Activated B cell treated with CpG ODN at 0.5 μM for 24 hours (primary cell): ENCODE measurements at regions of chr6 and their contacts with region 1.

Region 1: GRCh38 chr6:107756660-107757355 is 67.3 kb downstream of the SCML4 start:
- DNase-seq: no peak
- ATAC-seq: no peak
- H3K4me3 Mint-ChIP-seq: no peak overlapping the region
- H3K27ac Mint-ChIP-seq: no peak overlapping the region
- H3K4me1 Mint-ChIP-seq: no peaks in the 10 kb centered on the region
- H3K27me3 Mint-ChIP-seq: no peaks in the 10 kb centered on the region
- CTCF ChIP-seq: no peak

Region 2: DNA sequence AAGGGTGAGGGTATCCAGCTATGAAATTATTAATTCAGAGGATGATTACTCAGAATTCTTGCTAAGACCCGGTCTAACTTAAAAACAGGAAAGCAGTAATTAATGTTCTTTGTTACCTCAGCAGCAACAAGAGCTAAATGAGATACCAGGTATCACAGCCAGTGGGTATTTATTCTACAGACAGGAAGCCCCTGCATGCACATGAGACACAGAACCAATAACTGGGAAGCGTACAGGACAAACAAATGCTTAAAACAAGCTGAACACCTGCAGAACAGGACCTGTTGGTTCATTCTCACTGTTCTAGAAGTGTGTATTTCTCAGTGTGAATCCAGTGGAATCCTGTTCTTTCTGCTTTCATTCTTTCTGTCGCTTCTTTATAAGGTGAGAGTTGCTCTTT is 36.4 kb after region 1 on chr6:
- CTCF ChIA-PET with region 1: no interaction called
- POLR2A ChIA-PET with region 1: no interaction called
- intact Hi-C with region 1: loop called (anchors 5 kb)
- DNase-seq: no peak
- ATAC-seq: no peak
- H3K4me3 Mint-ChIP-seq: no peak overlapping the region
- H3K27ac Mint-ChIP-seq: no peak overlapping the region
- H3K4me1 Mint-ChIP-seq: peaks cover 31% of the 10 kb centered on the region
- H3K27me3 Mint-ChIP-seq: no peaks in the 10 kb centered on the region
- CTCF ChIP-seq: no peak

Region 3: GRCh38 chr6:107862383-107862782 is 105.6 kb after region 1 on chr6:
- CTCF ChIA-PET with region 1: no interaction called
- POLR2A ChIA-PET with region 1: no interaction called
- intact Hi-C with region 1: no loop called
- DNase-seq: no peak
- ATAC-seq: no peak
- H3K4me3 Mint-ChIP-seq: no peak overlapping the region
- H3K27ac Mint-ChIP-seq: no peak overlapping the region
- H3K4me1 Mint-ChIP-seq: peaks cover 6% of the 10 kb centered on the region
- H3K27me3 Mint-ChIP-seq: peaks cover 6% of the 10 kb centered on the region
- CTCF ChIP-seq: no peak